ENCODE measurements at regions of chr2 and their contacts with region 1.

Region 1: DNA sequence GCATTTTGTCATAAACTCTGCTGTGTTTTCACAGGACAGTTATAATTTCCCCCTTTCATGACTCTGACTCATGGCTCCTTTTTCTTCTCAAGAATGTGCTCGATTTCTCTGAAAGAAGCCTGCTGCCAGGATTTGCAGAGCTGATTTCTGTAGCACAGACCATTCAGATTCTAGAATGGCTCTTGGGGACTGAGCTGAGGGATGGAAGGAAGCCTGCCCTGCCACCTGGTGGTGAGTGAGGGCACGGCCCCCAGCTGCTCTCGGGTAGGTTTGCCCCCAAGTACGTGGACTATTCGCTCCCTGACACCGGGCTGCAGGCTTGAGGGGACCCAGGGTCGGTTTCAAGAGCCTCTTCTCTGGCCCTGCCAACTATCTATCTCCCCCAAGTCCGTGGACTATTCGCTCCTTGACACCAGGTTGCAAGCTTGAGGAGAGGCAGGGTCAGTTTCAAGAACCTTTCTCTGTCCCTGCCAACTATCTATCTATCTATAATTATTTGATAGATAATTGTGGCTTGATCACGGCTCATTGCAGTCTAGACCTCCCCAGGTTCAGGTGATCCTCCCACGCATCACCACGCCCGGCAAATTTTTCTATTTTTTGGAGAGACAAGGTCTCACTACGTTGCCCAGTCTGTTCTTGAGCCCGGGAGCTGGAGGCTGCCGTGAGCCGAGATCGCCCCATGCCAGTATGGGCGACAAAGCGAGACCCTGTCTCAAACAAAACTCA is 1.4 kb upstream of the SMYD5 start:
- DNase-seq: peak; percentile 81 to 92
- ATAC-seq: peak; percentile 76 to 89
- H3K4me3 ChIP-seq: no peak overlapping the region
- H3K27ac ChIP-seq: no peak overlapping the region
- H3K4me1 ChIP-seq: peaks cover 16% of the 10 kb centered on the region
- CTCF ChIP-seq: peak; percentile 92
- EP300 ChIP-seq: no peak
- POLR2A ChIP-seq: no peak
- RAD21 ChIP-seq: peak; percentile 72 to 73

Region 2: DNA sequence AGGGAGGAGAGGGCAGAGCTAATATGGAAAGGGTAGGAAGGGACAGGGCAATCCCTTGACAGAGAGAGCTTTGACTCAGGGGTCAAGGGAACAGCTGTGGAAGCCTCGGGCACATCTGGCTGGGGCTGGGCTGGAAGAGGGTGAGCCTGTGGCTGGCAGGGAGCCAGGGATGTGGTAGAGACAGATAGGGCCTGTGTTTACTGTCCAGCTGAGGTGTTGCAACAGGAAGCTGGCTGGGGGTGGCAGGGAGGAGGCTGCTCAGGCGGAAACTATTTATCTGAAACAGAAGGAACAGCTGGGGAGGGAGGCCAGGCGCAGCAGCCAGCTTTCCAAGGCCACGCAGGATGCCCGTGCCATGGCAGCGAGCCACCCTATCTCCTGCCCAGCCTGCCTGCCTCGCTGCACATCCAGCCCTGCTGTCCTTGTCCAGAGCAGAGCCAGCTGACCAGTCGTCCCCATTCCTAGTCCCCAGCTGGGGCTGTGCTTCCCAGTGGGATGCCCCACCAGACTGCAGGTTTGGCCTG is 1329.6 kb before region 1 on chr2:
- CTCF ChIA-PET with region 1: no interaction called
- POLR2A ChIA-PET with region 1: no interaction called
- DNase-seq: peak; percentile 29 to 79
- ATAC-seq: peak; percentile 74 to 79
- H3K4me3 ChIP-seq: no peak overlapping the region
- H3K27ac ChIP-seq: peak overlapping the region; percentile 67 to 78
- H3K4me1 ChIP-seq: peaks cover 43% of the 10 kb centered on the region
- CTCF ChIP-seq: no peak
- EP300 ChIP-seq: peak in 1 of 2 experiments; percentile 19; a peak in 1 of 5 replicates
- POLR2A ChIP-seq: no peak
- RAD21 ChIP-seq: peak in 1 of 2 experiments; percentile 32; a peak in 2 of 5 replicates

Region 3: DNA sequence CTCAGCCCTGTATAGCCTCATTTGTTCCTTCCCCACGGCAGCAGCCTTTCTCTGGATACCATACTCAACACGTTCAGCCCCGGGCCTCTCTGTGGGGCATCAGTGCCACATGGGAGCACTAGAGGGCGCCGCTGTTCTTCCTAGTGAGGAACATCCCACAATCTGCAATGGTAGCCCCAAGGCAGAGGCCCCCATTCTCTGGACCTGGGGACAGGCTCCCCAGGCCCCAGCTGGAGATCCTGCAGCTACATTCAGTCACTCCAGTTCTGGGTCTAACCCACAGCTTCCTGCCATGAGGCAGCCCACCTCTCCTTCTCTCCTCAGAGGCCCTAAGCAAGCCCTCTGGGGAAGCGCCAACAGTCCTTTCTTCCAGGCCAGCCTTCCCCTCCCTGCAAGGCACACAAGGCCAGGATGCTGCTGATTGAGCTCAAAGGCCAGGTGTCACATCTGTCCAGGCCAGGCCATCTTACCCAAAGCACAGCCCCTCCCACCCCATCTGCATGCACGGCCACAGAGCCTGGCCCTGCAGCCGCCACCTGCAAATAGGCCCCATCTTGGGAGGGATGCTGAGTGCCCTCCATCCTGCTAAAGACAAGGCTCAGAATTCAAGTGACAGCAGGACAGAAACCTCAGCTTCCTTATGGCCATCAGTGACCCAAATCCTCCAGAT is 126.8 kb before region 1 on chr2:
- CTCF ChIA-PET with region 1: interaction called, 34 read pairs
- POLR2A ChIA-PET with region 1: no interaction called
- DNase-seq: peak; percentile 74 to 87
- ATAC-seq: peak; percentile 78 to 92; a peak in 5 of 6 replicates
- H3K4me3 ChIP-seq: no peak overlapping the region
- H3K27ac ChIP-seq: no peak overlapping the region
- H3K4me1 ChIP-seq: peaks cover 18% of the 10 kb centered on the region
- CTCF ChIP-seq: peak; percentile 98
- EP300 ChIP-seq: no peak
- POLR2A ChIP-seq: no peak
- RAD21 ChIP-seq: peak; percentile 97 to 98

Region 4: GRCh38 chr2:73202156-73203054 is 10.2 kb before region 1 on chr2 and contains the start of gene NOTO:
- CTCF ChIA-PET with region 1: interaction called, 20 read pairs
- POLR2A ChIA-PET with region 1: interaction called, 3 read pairs
- DNase-seq: no peak
- ATAC-seq: peak; percentile 66 to 71
- H3K4me3 ChIP-seq: peak within 1 kb of the TSS; percentile 41
- H3K27ac ChIP-seq: peak within 1 kb of the TSS in 1 of 2 experiments; percentile 46; a peak in 3 of 6 replicates
- H3K4me1 ChIP-seq: peaks cover 12% of the 10 kb centered on the region
- CTCF ChIP-seq: no peak
- EP300 ChIP-seq: no peak
- POLR2A ChIP-seq: no peak
- RAD21 ChIP-seq: no peak
- polyA plus RNA-seq, gene NOTO: not detected in 2 replicates

Region 5: DNA sequence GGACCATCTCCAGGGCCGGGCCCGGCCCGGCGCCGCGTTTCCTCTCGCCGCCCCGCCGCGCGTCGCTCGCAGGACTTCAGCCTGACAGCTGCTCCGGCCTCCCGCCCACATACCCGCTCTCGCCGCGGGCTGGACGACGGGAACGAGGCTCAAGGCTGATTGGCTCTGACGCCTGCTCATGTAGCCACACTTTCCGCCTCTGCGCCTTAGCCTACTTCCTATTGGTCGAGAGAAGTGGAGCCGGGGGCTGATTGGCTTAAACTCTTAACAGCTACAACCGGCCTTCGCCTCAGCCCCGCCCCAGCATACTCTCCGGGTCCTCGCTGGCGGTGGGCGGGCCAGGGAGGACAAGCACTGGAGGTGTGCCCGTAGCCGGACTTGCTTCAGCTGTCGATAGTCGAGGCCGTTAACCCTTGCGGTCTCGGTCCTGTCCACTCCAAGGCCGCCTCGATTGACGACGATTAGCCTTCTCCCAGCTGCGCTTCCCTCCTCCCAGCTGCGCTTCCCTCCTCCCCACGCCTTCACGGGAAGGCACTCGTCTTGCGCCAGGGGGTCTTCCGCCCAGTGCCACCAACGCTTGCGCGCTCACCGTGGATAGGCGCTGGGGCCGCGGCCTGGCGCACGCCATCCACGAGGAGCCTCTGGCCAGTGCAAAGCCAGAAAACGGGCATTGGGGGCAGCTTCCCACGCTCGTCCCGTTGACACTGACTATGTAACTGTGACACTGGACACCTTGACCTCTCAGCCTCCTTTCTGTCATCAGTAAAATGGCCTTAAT is 20.7 kb after region 1 on chr2 and contains the start of gene PRADC1:
- CTCF ChIA-PET with region 1: interaction called, 37 read pairs
- POLR2A ChIA-PET with region 1: interaction called, 16 read pairs
- DNase-seq: peak; percentile 99 to 100
- ATAC-seq: peak; percentile 84 to 95
- H3K4me3 ChIP-seq: peak within 1 kb of the TSS; percentile 64
- H3K27ac ChIP-seq: peak within 1 kb of the TSS; percentile 85 to 92
- H3K4me1 ChIP-seq: peaks cover 24% of the 10 kb centered on the region
- CTCF ChIP-seq: no peak
- EP300 ChIP-seq: no peak
- POLR2A ChIP-seq: peak; percentile 75
- RAD21 ChIP-seq: no peak
- polyA plus RNA-seq, gene PRADC1: 9.5 and 11.2 TPM in 2 replicates

Region 6: GRCh38 chr2:73295751-73296400 is 83.3 kb after region 1 on chr2:
- CTCF ChIA-PET with region 1: no interaction called
- POLR2A ChIA-PET with region 1: no interaction called
- DNase-seq: peak in 1 of 2 experiments; percentile 35
- ATAC-seq: no peak
- H3K4me3 ChIP-seq: no peak overlapping the region
- H3K27ac ChIP-seq: no peak overlapping the region
- H3K4me1 ChIP-seq: peaks cover 18% of the 10 kb centered on the region; the same call in 2 of the 3 replicates
- CTCF ChIP-seq: no peak
- EP300 ChIP-seq: no peak
- POLR2A ChIP-seq: no peak
- RAD21 ChIP-seq: no peak

Measured in A549 (cell line).